Right cardiac atrium (tissue), 5 donors: ENCODE measurements at regions of chr4 and their contacts with region 1.

Region 1: GRCh38 chr4:176789955-176790354 is 2.8 kb downstream of the VEGFC start:
- DNase-seq: no peak
- ATAC-seq: peak in 1 of 2 donors; percentile 35
- H3K4me3 ChIP-seq: peak overlapping the region; percentile 41
- H3K27ac ChIP-seq: no peak overlapping the region
- H3K4me1 ChIP-seq: no peaks in the 10 kb centered on the region
- H3K27me3 ChIP-seq: no peaks in the 10 kb centered on the region

Region 2: DNA sequence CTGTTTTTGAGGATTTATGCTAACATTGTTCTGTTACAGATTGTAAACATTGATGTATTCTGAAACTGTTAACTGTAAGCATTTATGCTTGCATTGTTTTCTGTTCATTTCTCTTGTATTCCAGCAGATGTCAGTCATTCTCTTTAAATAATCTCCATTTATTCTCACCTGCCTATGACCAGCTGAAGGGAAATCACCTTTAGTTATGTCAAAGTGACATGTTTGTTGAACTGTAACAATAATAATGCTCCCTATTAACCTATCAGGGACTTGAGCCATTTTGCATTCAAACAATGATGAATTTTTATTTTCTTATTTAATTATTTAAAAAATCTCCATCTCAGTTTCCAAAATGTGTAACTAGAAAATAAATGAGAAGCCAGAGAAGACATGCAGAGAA is 412.2 kb before region 1 on chr4:
- intact Hi-C with region 1: loop called in 1 of 4 experiments (anchors 10 kb)
- DNase-seq: no peak
- ATAC-seq: peak in 1 of 2 donors; percentile 34
- H3K4me3 ChIP-seq: no peak overlapping the region
- H3K27ac ChIP-seq: no peak overlapping the region
- H3K4me1 ChIP-seq: no peaks in the 10 kb centered on the region
- H3K27me3 ChIP-seq: no peaks in the 10 kb centered on the region

Region 3: GRCh38 chr4:177047070-177047850 is 257.3 kb after region 1 on chr4:
- intact Hi-C with region 1: loop called in 1 of 4 experiments (anchors 10 kb)
- DNase-seq: peak; percentile 53 to 75 (median 55)
- ATAC-seq: peak; percentile 76 to 92
- H3K4me3 ChIP-seq: no peak overlapping the region
- H3K27ac ChIP-seq: no peak overlapping the region
- H3K4me1 ChIP-seq: no peaks in the 10 kb centered on the region
- H3K27me3 ChIP-seq: no peaks in the 10 kb centered on the region